HCT116 (cell line): ENCODE measurements at regions of chr6 and their contacts with region 1.

Region 1: DNA sequence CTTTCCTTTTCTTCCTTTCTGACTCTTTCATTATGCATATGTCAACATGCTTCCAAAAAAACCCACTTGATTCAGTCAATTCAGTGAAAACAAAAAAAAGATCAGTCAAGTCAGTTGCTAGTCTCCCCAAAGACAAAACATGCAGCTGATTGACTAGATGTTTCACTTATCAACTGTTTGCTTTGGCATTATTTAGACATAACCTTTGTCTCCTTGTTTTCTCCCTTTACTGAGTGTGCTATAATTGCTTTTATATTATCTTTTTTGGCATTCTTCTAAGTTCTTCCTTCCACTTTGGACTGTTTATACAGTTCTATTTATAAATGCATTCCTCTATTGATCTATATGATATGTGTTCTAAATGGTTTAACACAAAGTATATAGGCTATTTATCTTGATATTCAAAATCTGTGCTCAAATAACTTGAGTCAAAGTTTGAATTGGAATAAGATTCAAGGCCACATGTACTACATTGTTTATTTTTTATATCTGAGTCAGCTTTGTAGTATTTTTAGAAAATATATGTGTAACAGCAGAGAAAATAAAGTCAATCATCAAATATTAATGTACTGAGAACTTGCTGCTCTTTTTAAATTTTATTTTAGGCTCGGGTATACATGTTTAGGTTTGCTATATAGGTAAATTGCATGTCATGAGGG is 260.5 kb downstream of the CENPW start:
- DNase-seq: no peak
- ATAC-seq: no peak
- H3K4me3 ChIP-seq: no peak overlapping the region
- H3K27ac ChIP-seq: no peak overlapping the region
- H3K4me1 ChIP-seq: no peaks in the 10 kb centered on the region
- H3K27me3 ChIP-seq: no peaks in the 10 kb centered on the region
- CTCF ChIP-seq: no peak
- POLR2A ChIP-seq: no peak
- RAD21 ChIP-seq: no peak

Region 2: GRCh38 chr6:126643352-126643751 is 43.0 kb after region 1 on chr6:
- CTCF ChIA-PET with region 1: no interaction called
- POLR2A ChIA-PET with region 1: no interaction called
- RAD21 ChIA-PET with region 1: no interaction called
- intact Hi-C with region 1: loop called (anchors 1 kb)
- DNase-seq: no peak
- ATAC-seq: no peak
- H3K4me3 ChIP-seq: no peak overlapping the region
- H3K27ac ChIP-seq: no peak overlapping the region
- H3K4me1 ChIP-seq: no peaks in the 10 kb centered on the region
- H3K27me3 ChIP-seq: no peaks in the 10 kb centered on the region
- CTCF ChIP-seq: no peak
- POLR2A ChIP-seq: no peak
- RAD21 ChIP-seq: no peak

Region 3: GRCh38 chr6:127146932-127147331 is 546.5 kb after region 1 on chr6:
- CTCF ChIA-PET with region 1: no interaction called
- POLR2A ChIA-PET with region 1: no interaction called
- RAD21 ChIA-PET with region 1: no interaction called
- intact Hi-C with region 1: no loop called
- DNase-seq: no peak
- ATAC-seq: no peak
- H3K4me3 ChIP-seq: no peak overlapping the region
- H3K27ac ChIP-seq: no peak overlapping the region
- H3K4me1 ChIP-seq: no peaks in the 10 kb centered on the region
- H3K27me3 ChIP-seq: peaks cover 43% of the 10 kb centered on the region
- CTCF ChIP-seq: no peak
- POLR2A ChIP-seq: no peak
- RAD21 ChIP-seq: no peak